CD4-positive, alpha-beta memory T cell (primary cell): ENCODE measurements at regions of chr12 and their contacts with region 1.

Region 1: DNA sequence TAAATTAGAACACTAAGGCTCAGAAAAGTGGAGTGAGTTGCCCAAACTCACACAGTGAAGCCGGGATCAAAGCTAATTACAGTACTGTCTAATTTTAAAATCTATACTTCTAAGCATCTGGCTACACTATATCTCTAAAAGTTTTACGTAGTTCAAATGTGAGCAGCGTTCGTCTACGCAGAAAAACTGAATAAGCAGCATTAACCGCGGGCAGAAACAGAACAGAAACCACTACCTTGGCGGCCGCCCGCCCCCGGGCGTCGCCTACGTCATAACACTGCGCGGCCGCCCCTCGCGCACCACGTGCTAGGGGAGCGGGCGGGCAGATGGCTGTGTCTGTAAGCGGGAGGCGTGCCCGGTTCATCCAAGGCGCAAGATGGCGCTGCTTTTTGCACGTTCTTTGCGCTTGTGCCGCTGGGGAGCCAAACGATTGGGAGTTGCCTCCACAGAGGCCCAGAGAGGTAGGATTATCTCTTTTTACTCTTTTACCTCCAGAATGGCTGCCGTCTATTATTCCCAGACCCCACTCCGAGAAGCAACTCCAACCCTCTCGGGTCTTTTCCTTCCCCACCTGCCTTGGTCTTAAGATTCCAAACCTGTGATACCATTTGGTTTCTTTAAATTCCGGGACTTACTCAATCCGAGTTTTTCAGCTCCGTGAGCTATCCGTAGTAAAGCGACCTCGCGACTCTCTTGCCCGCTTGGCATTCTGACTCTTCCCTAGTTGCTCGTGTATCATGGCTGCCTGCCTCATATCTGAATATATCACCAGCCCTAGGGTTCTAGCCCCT is at the start of gene SPRYD4:
- DNase-seq: peak; percentile 94 to 96 (median 95)
- H3K4me3 ChIP-seq: peak within 1 kb of the TSS; percentile 90 to 98
- H3K4me3 Mint-ChIP-seq: peak within 1 kb of the TSS; percentile 93 to 98 (median 96)
- H3K27ac ChIP-seq: peak within 1 kb of the TSS; percentile 73
- H3K27ac Mint-ChIP-seq: peak within 1 kb of the TSS; percentile 94 to 99 (median 98)
- H3K4me1 ChIP-seq: peaks cover 26% of the 10 kb centered on the region
- H3K4me1 Mint-ChIP-seq: peaks cover 14 to 44% (median 26%) of the 10 kb centered on the region in 4 donors
- H3K27me3 ChIP-seq: no peaks in the 10 kb centered on the region
- H3K27me3 Mint-ChIP-seq: no peaks in the 10 kb centered on the region
- total RNA-seq, gene SPRYD4: 6.5 to 6.9 TPM

Region 2: DNA sequence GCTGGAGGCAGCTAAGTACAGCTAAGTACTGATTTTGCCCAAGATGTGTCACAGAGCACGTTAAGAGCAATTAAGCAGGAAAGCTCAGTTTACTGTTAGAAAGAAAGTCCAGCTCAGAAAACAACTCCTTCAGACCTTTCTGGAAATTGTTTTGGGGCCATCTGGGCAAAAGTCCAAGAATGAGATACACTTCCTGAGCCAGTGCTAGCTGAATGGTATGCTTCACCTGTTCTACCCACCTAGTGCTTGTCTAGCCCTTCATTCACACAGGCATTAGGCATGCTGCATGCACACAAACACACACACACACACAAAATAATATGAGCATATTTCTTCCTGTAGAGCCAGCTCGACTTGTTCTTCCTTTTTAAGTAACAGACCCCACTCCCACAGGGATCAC is 454.2 kb before region 1 on chr12:
- CTCF ChIA-PET with region 1: no interaction called
- POLR2A ChIA-PET with region 1: no interaction called
- intact Hi-C with region 1: no loop called
- DNase-seq: no peak
- H3K4me3 ChIP-seq: no peak overlapping the region
- H3K4me3 Mint-ChIP-seq: no peak overlapping the region
- H3K27ac ChIP-seq: no peak overlapping the region
- H3K27ac Mint-ChIP-seq: no peak overlapping the region
- H3K4me1 ChIP-seq: no peaks in the 10 kb centered on the region
- H3K4me1 Mint-ChIP-seq: peaks cover 0 to under 1% (median 0%) of the 10 kb centered on the region in 4 donors
- H3K27me3 ChIP-seq: no peaks in the 10 kb centered on the region
- H3K27me3 Mint-ChIP-seq: no peaks in the 10 kb centered on the region

Region 3: DNA sequence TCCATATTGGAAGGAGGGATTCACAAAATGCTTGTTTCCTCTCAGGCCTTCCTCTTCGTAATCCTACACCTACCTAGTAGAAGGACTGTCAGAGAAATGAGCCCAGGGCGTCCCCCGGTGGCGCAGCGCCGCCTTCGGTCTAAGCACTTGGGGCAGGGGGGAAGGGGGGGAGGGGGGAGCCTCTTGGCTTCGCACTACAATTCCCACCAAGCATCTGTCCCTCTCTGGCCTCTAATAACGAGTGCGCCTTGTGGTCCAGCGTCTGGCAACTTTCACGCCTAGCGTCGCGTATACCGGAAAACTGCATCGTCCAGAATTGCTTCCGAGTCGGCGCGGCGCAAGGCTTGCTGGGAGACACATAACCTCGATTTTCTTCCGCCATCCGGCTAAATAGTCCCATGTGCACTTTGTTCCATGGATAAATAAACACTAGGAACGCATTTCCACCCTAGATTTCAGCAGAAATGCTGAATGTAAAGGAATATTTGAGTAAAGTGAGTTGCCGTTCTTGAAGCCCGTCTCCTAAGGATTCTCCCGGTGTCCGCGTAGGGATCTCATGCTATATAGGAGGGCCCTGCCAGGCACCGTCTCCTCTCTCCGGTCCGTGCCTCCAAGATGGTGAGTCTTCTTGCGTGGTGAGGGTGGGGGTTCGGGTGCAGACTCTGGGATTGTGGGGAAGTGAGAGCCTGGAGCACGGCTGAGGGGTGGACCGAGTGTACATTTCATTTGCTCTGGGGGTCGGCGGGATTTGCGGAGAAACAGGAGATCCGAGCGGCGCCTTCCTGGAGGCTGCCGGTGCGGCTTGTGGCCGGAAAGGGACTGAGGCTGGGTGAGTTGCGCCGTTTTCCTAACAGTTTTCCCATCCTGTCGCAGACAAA is 426.6 kb before region 1 on chr12 and contains the start of gene RPS26:
- CTCF ChIA-PET with region 1: no interaction called
- POLR2A ChIA-PET with region 1: no interaction called
- intact Hi-C with region 1: loop called (anchors 2 kb)
- DNase-seq: peak; percentile 95 to 98 (median 96)
- H3K4me3 ChIP-seq: peak within 1 kb of the TSS; percentile 94 to 97
- H3K4me3 Mint-ChIP-seq: peak within 1 kb of the TSS; percentile 98 to 100 (median 99)
- H3K27ac ChIP-seq: peak within 1 kb of the TSS; percentile 87
- H3K27ac Mint-ChIP-seq: peak within 1 kb of the TSS; percentile 96 to 100 (median 99)
- H3K4me1 ChIP-seq: peaks cover 23% of the 10 kb centered on the region
- H3K4me1 Mint-ChIP-seq: peaks cover 15 to 45% (median 23%) of the 10 kb centered on the region in 4 donors
- H3K27me3 ChIP-seq: no peaks in the 10 kb centered on the region
- H3K27me3 Mint-ChIP-seq: no peaks in the 10 kb centered on the region
- total RNA-seq, gene RPS26: 55.6 to 55.8 TPM

Region 4: GRCh38 chr12:56258057-56258819 is 210.2 kb before region 1 on chr12 and contains the start of gene ANKRD52:
- CTCF ChIA-PET with region 1: interaction called, 18 read pairs
- POLR2A ChIA-PET with region 1: interaction called, 5 read pairs
- intact Hi-C with region 1: loop called (anchors 1 kb)
- DNase-seq: peak; percentile 76 to 87 (median 82)
- H3K4me3 ChIP-seq: peak within 1 kb of the TSS; percentile 85 to 95
- H3K4me3 Mint-ChIP-seq: peak within 1 kb of the TSS; percentile 89 to 97 (median 92)
- H3K27ac ChIP-seq: peak within 1 kb of the TSS; percentile 81
- H3K27ac Mint-ChIP-seq: peak within 1 kb of the TSS; percentile 82 to 95 (median 91)
- H3K4me1 ChIP-seq: peaks cover 21% of the 10 kb centered on the region
- H3K4me1 Mint-ChIP-seq: peaks cover 13 to 31% (median 19%) of the 10 kb centered on the region in 4 donors
- H3K27me3 ChIP-seq: no peaks in the 10 kb centered on the region
- H3K27me3 Mint-ChIP-seq: no peaks in the 10 kb centered on the region
- total RNA-seq, gene ANKRD52: 44.1 to 44.5 TPM

Region 5: GRCh38 chr12:56299853-56300643 is 168.4 kb before region 1 on chr12 and contains the start of gene CS:
- CTCF ChIA-PET with region 1: interaction called, 6 read pairs
- POLR2A ChIA-PET with region 1: interaction called, 4 read pairs
- intact Hi-C with region 1: loop called (anchors 1 kb)
- DNase-seq: peak; percentile 98 to 99 (median 99)
- H3K4me3 ChIP-seq: peak within 1 kb of the TSS; percentile 79 to 97
- H3K4me3 Mint-ChIP-seq: peak within 1 kb of the TSS; percentile 90 to 97 (median 96)
- H3K27ac ChIP-seq: peak within 1 kb of the TSS; percentile 99
- H3K27ac Mint-ChIP-seq: peak within 1 kb of the TSS; percentile 95 to 99 (median 98)
- H3K4me1 ChIP-seq: peaks cover 57% of the 10 kb centered on the region
- H3K4me1 Mint-ChIP-seq: peaks cover 31 to 66% (median 50%) of the 10 kb centered on the region in 4 donors
- H3K27me3 ChIP-seq: no peaks in the 10 kb centered on the region
- H3K27me3 Mint-ChIP-seq: no peaks in the 10 kb centered on the region
- total RNA-seq, gene CS: 134 to 136 TPM

Region 6: GRCh38 chr12:56333679-56334489 is 134.5 kb before region 1 on chr12 and contains the start of gene PAN2:
- CTCF ChIA-PET with region 1: interaction called, 24 read pairs
- POLR2A ChIA-PET with region 1: interaction called, 13 read pairs
- intact Hi-C with region 1: loop called (anchors 1 kb)
- DNase-seq: peak; percentile 92 to 96 (median 93)
- H3K4me3 ChIP-seq: peak within 1 kb of the TSS; percentile 69 to 83
- H3K4me3 Mint-ChIP-seq: peak within 1 kb of the TSS; percentile 89 to 99 (median 94)
- H3K27ac ChIP-seq: peak within 1 kb of the TSS; percentile 99
- H3K27ac Mint-ChIP-seq: peak within 1 kb of the TSS; percentile 99 to 100 (median 100)
- H3K4me1 ChIP-seq: peaks cover 37% of the 10 kb centered on the region
- H3K4me1 Mint-ChIP-seq: peaks cover 23 to 50% (median 30%) of the 10 kb centered on the region in 4 donors
- H3K27me3 ChIP-seq: no peaks in the 10 kb centered on the region
- H3K27me3 Mint-ChIP-seq: peaks cover 0 to 2% of the 10 kb centered on the region in 2 donors
- total RNA-seq, gene PAN2: 193 to 203 TPM

Region 7: DNA sequence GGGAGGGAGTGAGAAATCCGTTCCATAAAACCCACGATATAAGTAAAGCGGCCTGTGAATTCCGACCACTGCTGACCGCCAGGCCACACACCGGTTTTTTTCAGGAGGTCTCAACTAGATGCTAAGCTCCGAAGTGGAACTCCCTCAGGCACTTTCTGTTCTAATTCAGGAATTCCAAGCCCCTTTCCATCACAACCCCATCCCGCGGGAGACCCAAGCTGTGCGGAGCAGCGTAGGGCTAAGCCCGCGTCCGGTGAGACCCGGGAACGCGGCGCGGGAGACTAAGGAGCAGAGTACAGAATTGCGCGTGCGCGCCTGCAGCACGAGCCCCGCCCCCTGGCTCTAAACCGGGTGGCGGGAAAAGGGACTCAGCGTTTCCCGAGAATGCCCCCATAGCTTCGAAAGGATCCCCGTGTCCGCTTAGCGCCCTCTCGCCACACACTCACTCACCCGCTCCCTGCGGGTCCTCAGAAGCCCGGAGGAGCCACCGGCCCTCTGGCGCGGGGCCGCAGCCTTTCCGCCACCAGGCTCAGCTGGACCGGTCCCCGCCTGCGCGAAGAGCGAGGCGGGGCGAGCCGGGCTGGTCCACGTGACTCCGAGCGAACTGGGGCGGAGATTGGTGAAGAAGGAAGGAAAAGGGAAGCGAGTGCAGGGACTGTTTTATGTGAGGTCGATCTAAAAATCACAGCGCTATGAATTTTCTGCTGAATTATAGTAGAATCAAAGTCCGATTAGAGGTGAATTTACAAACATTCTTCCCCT is 19.4 kb before region 1 on chr12 and contains the start of gene TIMELESS:
- CTCF ChIA-PET with region 1: interaction called, 34 read pairs
- POLR2A ChIA-PET with region 1: interaction called, 18 read pairs
- intact Hi-C with region 1: loop called (anchors 1 kb)
- DNase-seq: peak; percentile 85 to 90 (median 86)
- H3K4me3 ChIP-seq: peak within 1 kb of the TSS; percentile 96
- H3K4me3 Mint-ChIP-seq: peak within 1 kb of the TSS; percentile 90 to 95 (median 94)
- H3K27ac ChIP-seq: peak within 1 kb of the TSS; percentile 75
- H3K27ac Mint-ChIP-seq: peak within 1 kb of the TSS; percentile 75 to 98 (median 97)
- H3K4me1 ChIP-seq: peaks cover 7% of the 10 kb centered on the region
- H3K4me1 Mint-ChIP-seq: peaks cover 11 to 28% (median 16%) of the 10 kb centered on the region in 4 donors
- H3K27me3 ChIP-seq: no peaks in the 10 kb centered on the region
- H3K27me3 Mint-ChIP-seq: no peaks in the 10 kb centered on the region
- total RNA-seq, gene TIMELESS: 7.3 to 7.5 TPM

Region 8: DNA sequence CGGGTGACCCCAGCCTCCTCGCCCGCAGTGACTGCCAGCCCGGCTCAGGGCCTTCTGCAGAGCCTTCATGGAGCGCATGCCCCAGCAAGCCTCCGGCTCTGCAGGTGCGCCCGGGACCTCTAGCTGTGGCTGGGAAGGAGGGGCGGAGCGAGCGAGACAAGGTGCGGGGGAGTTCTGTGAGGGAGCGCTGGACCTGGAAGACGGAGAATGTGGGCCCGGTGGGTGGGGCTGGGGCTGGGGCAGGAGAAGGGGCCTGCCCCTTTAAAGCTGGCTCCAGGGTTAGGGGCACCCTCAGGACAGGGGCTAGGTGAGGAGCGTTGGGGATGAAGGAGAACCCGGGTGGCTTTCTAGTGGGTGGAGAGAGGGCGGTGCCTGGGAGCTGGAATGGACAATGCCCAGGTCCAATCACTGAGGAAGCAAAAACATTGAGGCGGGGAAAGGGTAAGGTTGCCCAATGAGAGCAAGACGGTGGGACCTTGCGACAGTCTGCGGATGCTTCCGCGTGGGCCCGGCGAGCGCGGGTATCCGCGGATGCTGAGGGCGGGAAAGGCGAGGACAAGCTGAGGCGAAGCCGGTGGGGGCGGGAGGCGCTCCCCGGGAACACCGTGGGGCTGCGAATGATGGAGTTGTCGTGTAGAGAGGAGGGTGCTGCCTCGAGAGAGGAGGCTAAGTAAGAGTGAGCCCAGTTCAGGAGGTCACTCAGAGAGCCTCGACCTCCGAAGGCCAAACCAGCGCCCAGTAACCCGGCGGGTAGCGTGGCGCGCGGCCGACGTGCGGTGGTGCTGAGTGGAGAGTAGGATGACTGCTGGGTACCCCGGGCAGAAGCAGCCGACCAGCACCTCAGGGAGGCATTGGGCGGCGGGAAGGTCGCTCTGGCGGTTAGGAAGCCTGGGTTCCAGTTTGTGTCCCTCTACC is 19.9 kb after region 1 on chr12 and contains the start of gene GLS2:
- CTCF ChIA-PET with region 1: interaction called, 6 read pairs
- POLR2A ChIA-PET with region 1: interaction called, 9 read pairs
- intact Hi-C with region 1: loop called (anchors 1 kb)
- DNase-seq: peak; percentile 80 to 84 (median 82)
- H3K4me3 ChIP-seq: peak within 1 kb of the TSS; percentile 61 to 78
- H3K4me3 Mint-ChIP-seq: peak within 1 kb of the TSS; percentile 89 to 98 (median 94)
- H3K27ac ChIP-seq: no peak within 1 kb of the TSS
- H3K27ac Mint-ChIP-seq: peak within 1 kb of the TSS; percentile 16 to 95 (median 87)
- H3K4me1 ChIP-seq: peaks cover 14% of the 10 kb centered on the region
- H3K4me1 Mint-ChIP-seq: peaks cover 11 to 21% (median 15%) of the 10 kb centered on the region in 4 donors
- H3K27me3 ChIP-seq: no peaks in the 10 kb centered on the region
- H3K27me3 Mint-ChIP-seq: peaks cover 10% of the 10 kb centered on the region in 2 donors
- total RNA-seq, gene GLS2: 9.8 to 12.2 TPM